Activated T-helper 2 cell treated with anti-CD3 and anti-CD28 coated beads, Interferon-gamma antibody, Interleukin-2, Interleukin-4, amounts not matched to agents 10 μg/mL and 5 μg/mL and 100 μg/mL, durations not matched to agents 14 hours and 24 hours and 36 hours (primary cell): ENCODE measurements at regions of chr19 and their contacts with region 1.

Region 1: GRCh38 chr19:58228585-58229254 is at the start of gene ZNF544:
- DNase-seq: peak; percentile 52
- H3K4me3 Mint-ChIP-seq: peak within 1 kb of the TSS; percentile 92
- H3K27ac Mint-ChIP-seq: peak within 1 kb of the TSS; percentile 91
- H3K4me1 Mint-ChIP-seq: peaks cover 13% of the 10 kb centered on the region
- H3K27me3 Mint-ChIP-seq: no peaks in the 10 kb centered on the region
- total RNA-seq, gene ZNF544: 42.0 and 49.1 TPM in 2 replicates

Region 2: GRCh38 chr19:58009666-58010371 is 218.9 kb before region 1 on chr19:
- intact Hi-C with region 1: no loop called
- DNase-seq: peak; percentile 65
- H3K4me3 Mint-ChIP-seq: peak overlapping the region; percentile 77
- H3K27ac Mint-ChIP-seq: no peak overlapping the region
- H3K4me1 Mint-ChIP-seq: peaks cover 2% of the 10 kb centered on the region
- H3K27me3 Mint-ChIP-seq: no peaks in the 10 kb centered on the region

Region 3: GRCh38 chr19:58278157-58279041 is 49.7 kb after region 1 on chr19 and contains the start of gene ZNF8:
- intact Hi-C with region 1: loop called (anchors 5 kb)
- DNase-seq: peak; percentile 96
- H3K4me3 Mint-ChIP-seq: peak within 1 kb of the TSS; percentile 94
- H3K27ac Mint-ChIP-seq: peak within 1 kb of the TSS; percentile 94
- H3K4me1 Mint-ChIP-seq: peaks cover 21% of the 10 kb centered on the region
- H3K27me3 Mint-ChIP-seq: no peaks in the 10 kb centered on the region
- total RNA-seq, gene ZNF8: 4.7 and 5.3 TPM in 2 replicates